Adrenal gland (tissue), 19 donors: ENCODE measurements at regions of chr9 and their contacts with region 1.

Region 1: GRCh38 chr9:33180526-33181184 is 13.5 kb upstream of the B4GALT1 start:
- DNase-seq: no peak
- H3K4me3 ChIP-seq: no peak overlapping the region
- H3K27ac ChIP-seq: peak overlapping the region in 1 of 5 donors; percentile 65
- H3K4me1 ChIP-seq: no peaks in the 10 kb centered on the region
- H3K27me3 ChIP-seq: no peaks in the 10 kb centered on the region
- CTCF ChIP-seq: no peak
- POLR2A ChIP-seq: no peak

Region 2: GRCh38 chr9:33076358-33077004 is 104.2 kb before region 1 on chr9 and contains the start of gene SMU1:
- intact Hi-C with region 1: no loop called
- DNase-seq: peak; percentile 96 to 99 (median 98)
- H3K4me3 ChIP-seq: peak within 1 kb of the TSS; percentile 35 to 79 (median 60)
- H3K27ac ChIP-seq: peak within 1 kb of the TSS; percentile 77 to 98 (median 96)
- H3K4me1 ChIP-seq: peaks cover 0 to 14% of the 10 kb centered on the region in 2 donors
- H3K27me3 ChIP-seq: no peaks in the 10 kb centered on the region
- CTCF ChIP-seq: no peak
- POLR2A ChIP-seq: peak; percentile 50 to 83
- total RNA-seq, gene SMU1: 15.0 to 28.3 (median 21.9) TPM

Region 3: DNA sequence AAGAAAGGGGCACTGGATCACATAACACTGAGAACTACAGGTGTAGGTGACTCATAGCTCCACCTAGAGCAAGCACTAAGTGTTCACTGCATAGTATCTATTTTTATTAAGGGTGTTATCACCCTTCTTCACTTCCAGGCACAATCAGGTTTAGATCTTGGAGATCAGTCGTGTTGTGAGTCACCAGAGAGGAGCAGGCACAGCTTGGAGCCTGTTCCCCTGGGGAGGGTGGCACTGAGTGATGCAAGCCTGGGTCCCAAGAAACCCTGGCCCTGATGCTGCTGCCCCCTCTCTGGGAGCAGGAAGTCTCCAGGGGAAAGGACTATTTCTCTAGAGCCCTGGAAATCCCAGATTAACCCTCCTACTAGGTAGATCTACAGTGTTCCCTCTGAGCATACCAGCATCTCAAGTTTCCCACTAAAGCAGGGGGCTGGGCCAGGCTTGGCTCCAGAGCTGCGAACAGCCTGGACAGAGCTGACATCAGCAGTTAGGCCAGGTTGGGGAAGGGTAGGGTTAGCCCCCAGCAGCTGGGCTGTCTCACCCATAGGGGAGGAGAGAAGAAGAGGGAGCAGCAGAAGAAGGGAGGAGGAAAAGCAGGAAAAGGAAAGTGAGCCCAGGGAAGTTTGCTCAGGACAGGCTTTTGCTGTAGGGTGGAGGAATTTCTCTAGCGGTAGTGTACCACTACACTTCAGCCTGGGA is 31.2 kb after region 1 on chr9:
- intact Hi-C with region 1: loop called in 1 of 2 experiments (anchors 5 kb)
- DNase-seq: no peak
- H3K4me3 ChIP-seq: no peak overlapping the region
- H3K27ac ChIP-seq: no peak overlapping the region
- H3K4me1 ChIP-seq: no peaks in the 10 kb centered on the region
- H3K27me3 ChIP-seq: no peaks in the 10 kb centered on the region
- CTCF ChIP-seq: no peak
- POLR2A ChIP-seq: no peak